CD8-positive, alpha-beta T cell (primary cell): ENCODE measurements at regions of chr21 and their contacts with region 1.

Region 1: GRCh38 chr21:25734904-25735645 is at the starts of genes ATP5PF and GABPA:
- DNase-seq: peak; percentile 95 to 100 (median 98)
- ATAC-seq: peak; percentile 84
- H3K4me3 ChIP-seq: peak within 1 kb of the TSS; percentile 91 to 96
- H3K4me3 Mint-ChIP-seq: peak within 1 kb of the TSS; percentile 100
- H3K27ac ChIP-seq: peak within 1 kb of the TSS; percentile 89 to 99
- H3K27ac Mint-ChIP-seq: peak within 1 kb of the TSS; percentile 100
- H3K4me1 ChIP-seq: peaks cover 21% of the 10 kb centered on the region
- H3K4me1 Mint-ChIP-seq: peaks cover 56% of the 10 kb centered on the region
- H3K27me3 ChIP-seq: no peaks in the 10 kb centered on the region
- H3K27me3 Mint-ChIP-seq: no peaks in the 10 kb centered on the region
- CTCF ChIP-seq: no peak
- total RNA-seq, gene ATP5PF: 26.8 to 28.1 TPM
- total RNA-seq, gene GABPA: 21.3 to 25.1 TPM

Region 2: DNA sequence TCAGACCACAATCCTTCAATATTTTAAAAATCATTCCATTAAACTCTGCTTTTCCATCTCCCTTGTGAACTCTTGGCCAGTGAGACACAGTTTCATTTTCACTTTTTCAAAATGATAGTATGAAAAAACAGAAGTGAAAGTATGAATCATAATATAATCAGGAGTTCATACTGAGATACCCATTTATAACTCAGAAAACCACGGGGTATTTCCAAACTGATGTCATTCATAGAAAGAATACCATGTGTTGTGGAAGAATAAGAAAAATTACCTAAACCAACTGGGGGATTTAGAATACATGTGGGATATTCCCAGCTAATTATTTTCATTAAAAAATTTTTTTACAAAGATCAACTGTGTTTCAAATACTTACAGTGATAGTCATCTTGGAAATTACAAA is 277.7 kb before region 1 on chr21:
- CTCF ChIA-PET with region 1: no interaction called
- POLR2A ChIA-PET with region 1: no interaction called
- intact Hi-C with region 1: loop called (anchors 1 to 5 kb)
- DNase-seq: peak in 2 of 9 experiments; percentile 77 to 87
- ATAC-seq: peak; percentile 90
- H3K4me3 ChIP-seq: peak overlapping the region in 1 of 2 experiments; percentile 30
- H3K4me3 Mint-ChIP-seq: peak overlapping the region; percentile 75
- H3K27ac ChIP-seq: peak overlapping the region in 1 of 2 experiments; percentile 74
- H3K27ac Mint-ChIP-seq: peak overlapping the region; percentile 83
- H3K4me1 ChIP-seq: peaks cover 12% of the 10 kb centered on the region
- H3K4me1 Mint-ChIP-seq: peaks cover 16% of the 10 kb centered on the region
- H3K27me3 ChIP-seq: no peaks in the 10 kb centered on the region
- H3K27me3 Mint-ChIP-seq: no peaks in the 10 kb centered on the region
- CTCF ChIP-seq: no peak

Region 3: DNA sequence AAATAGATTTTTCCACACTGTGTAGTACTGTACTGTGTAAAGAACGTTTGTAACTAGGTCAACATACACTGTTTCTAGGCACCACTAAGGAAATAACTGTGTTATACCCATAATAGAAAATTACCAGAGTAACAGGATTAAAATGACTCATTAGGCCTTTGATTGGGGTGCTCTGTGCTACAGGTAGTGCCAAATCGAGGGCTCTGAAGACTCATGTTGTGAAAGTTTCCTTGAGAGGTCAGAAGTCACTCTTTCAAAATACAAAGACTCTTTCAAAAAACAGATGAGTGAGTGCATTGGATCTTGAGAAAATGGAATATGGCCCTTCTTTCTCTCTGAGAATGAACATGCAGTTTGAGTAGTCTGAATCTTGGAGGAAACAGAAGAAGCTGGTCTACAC is 270.8 kb before region 1 on chr21:
- CTCF ChIA-PET with region 1: no interaction called
- POLR2A ChIA-PET with region 1: no interaction called
- intact Hi-C with region 1: loop called in 1 of 2 experiments (anchors 5 kb)
- DNase-seq: peak in 2 of 9 experiments; percentile 24 to 40
- ATAC-seq: peak; percentile 68
- H3K4me3 ChIP-seq: no peak overlapping the region
- H3K4me3 Mint-ChIP-seq: no peak overlapping the region
- H3K27ac ChIP-seq: no peak overlapping the region
- H3K27ac Mint-ChIP-seq: no peak overlapping the region
- H3K4me1 ChIP-seq: no peaks in the 10 kb centered on the region
- H3K4me1 Mint-ChIP-seq: peaks cover 11% of the 10 kb centered on the region
- H3K27me3 ChIP-seq: no peaks in the 10 kb centered on the region
- H3K27me3 Mint-ChIP-seq: no peaks in the 10 kb centered on the region
- CTCF ChIP-seq: no peak

Region 4: GRCh38 chr21:25561668-25562641 is 173.1 kb before region 1 on chr21:
- CTCF ChIA-PET with region 1: no interaction called
- POLR2A ChIA-PET with region 1: interaction called, 3 read pairs
- intact Hi-C with region 1: loop called in 1 of 2 experiments (anchors 1 kb)
- DNase-seq: peak in 8 of 9 experiments; percentile 45 to 84 (median 66)
- ATAC-seq: peak; percentile 77
- H3K4me3 ChIP-seq: peak overlapping the region; percentile 67 to 80
- H3K4me3 Mint-ChIP-seq: peak overlapping the region; percentile 95
- H3K27ac ChIP-seq: peak overlapping the region; percentile 17 to 69
- H3K27ac Mint-ChIP-seq: peak overlapping the region; percentile 93
- H3K4me1 ChIP-seq: peaks cover 22% of the 10 kb centered on the region
- H3K4me1 Mint-ChIP-seq: peaks cover 52% of the 10 kb centered on the region
- H3K27me3 ChIP-seq: no peaks in the 10 kb centered on the region
- H3K27me3 Mint-ChIP-seq: no peaks in the 10 kb centered on the region
- CTCF ChIP-seq: no peak

Region 5: GRCh38 chr21:25750085-25750484 is 15.0 kb after region 1 on chr21:
- CTCF ChIA-PET with region 1: interaction called, 3 read pairs
- POLR2A ChIA-PET with region 1: interaction called, 9 read pairs
- intact Hi-C with region 1: loop called in 1 of 2 experiments (anchors 2 kb)
- DNase-seq: peak in 1 of 9 experiments; percentile 26
- ATAC-seq: peak; percentile 44
- H3K4me3 ChIP-seq: no peak overlapping the region
- H3K4me3 Mint-ChIP-seq: no peak overlapping the region
- H3K27ac ChIP-seq: peak overlapping the region in 1 of 2 experiments; percentile 44
- H3K27ac Mint-ChIP-seq: peak overlapping the region; percentile 92
- H3K4me1 ChIP-seq: peaks cover 9% of the 10 kb centered on the region
- H3K4me1 Mint-ChIP-seq: peaks cover 13% of the 10 kb centered on the region
- H3K27me3 ChIP-seq: no peaks in the 10 kb centered on the region
- H3K27me3 Mint-ChIP-seq: no peaks in the 10 kb centered on the region
- CTCF ChIP-seq: no peak

Region 6: GRCh38 chr21:25801217-25802014 is 66.3 kb after region 1 on chr21:
- CTCF ChIA-PET with region 1: no interaction called
- POLR2A ChIA-PET with region 1: no interaction called
- intact Hi-C with region 1: loop called (anchors 5 to 10 kb)
- DNase-seq: peak; percentile 63 to 88 (median 82)
- ATAC-seq: peak; percentile 100
- H3K4me3 ChIP-seq: no peak overlapping the region
- H3K4me3 Mint-ChIP-seq: peak overlapping the region; percentile 30
- H3K27ac ChIP-seq: no peak overlapping the region
- H3K27ac Mint-ChIP-seq: no peak overlapping the region
- H3K4me1 ChIP-seq: peaks cover 3% of the 10 kb centered on the region
- H3K4me1 Mint-ChIP-seq: peaks cover 7% of the 10 kb centered on the region
- H3K27me3 ChIP-seq: no peaks in the 10 kb centered on the region
- H3K27me3 Mint-ChIP-seq: peaks cover 10% of the 10 kb centered on the region
- CTCF ChIP-seq: peak; percentile 97

Region 7: DNA sequence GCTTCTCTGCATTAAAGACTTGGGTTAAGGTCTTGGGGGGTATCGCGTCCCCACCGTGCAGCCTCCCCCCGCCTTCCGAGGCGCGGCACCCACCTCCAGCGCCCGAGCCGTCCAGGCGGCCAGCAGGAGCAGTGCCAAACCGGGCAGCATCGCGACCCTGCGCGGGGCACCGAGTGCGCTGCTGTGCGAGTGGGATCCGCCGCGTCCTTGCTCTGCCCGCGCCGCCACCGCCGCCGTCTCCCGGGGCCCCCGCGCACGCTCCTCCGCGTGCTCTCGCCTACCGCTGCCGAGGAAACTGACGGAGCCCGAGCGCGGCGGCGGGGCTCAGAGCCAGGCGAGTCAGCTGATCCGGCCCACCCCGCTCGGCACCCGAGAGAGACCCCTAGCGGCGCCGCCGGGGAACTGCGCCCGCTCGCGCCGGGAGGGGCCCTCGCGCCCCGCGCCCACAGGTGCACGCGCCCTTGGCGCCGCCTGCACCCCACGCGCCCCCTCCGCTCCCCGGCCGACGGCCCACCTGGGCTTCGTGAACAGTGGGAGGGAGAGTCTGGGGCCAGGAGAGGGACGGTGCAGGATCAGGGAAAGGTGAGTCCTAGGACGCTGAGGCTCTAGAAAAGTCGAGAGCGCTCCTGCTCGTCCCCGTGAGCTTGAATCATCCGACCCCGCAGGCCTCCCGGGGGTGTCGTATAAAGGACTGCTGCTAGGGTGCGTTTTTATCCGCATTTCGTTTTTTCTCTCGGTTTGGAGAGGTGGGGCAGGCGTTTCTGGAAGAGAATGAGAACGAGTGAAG is 435.6 kb after region 1 on chr21 and contains the start of gene APP:
- CTCF ChIA-PET with region 1: no interaction called
- POLR2A ChIA-PET with region 1: no interaction called
- intact Hi-C with region 1: loop called (anchors 2 to 5 kb)
- DNase-seq: peak; percentile 75 to 93 (median 84)
- ATAC-seq: peak; percentile 89
- H3K4me3 ChIP-seq: peak within 1 kb of the TSS; percentile 54 to 85
- H3K4me3 Mint-ChIP-seq: peak within 1 kb of the TSS; percentile 96
- H3K27ac ChIP-seq: peak within 1 kb of the TSS in 1 of 2 experiments; percentile 36
- H3K27ac Mint-ChIP-seq: peak within 1 kb of the TSS; percentile 71
- H3K4me1 ChIP-seq: peaks cover 12% of the 10 kb centered on the region
- H3K4me1 Mint-ChIP-seq: peaks cover 14% of the 10 kb centered on the region
- H3K27me3 ChIP-seq: no peaks in the 10 kb centered on the region
- H3K27me3 Mint-ChIP-seq: peaks cover 11% of the 10 kb centered on the region
- CTCF ChIP-seq: peak; percentile 89
- total RNA-seq, gene APP: 14.3 to 18.7 TPM

Region 8: GRCh38 chr21:26766826-26767325 is 1031.8 kb after region 1 on chr21:
- CTCF ChIA-PET with region 1: no interaction called
- POLR2A ChIA-PET with region 1: no interaction called
- intact Hi-C with region 1: no loop called
- DNase-seq: no peak
- ATAC-seq: no peak
- H3K4me3 ChIP-seq: no peak overlapping the region
- H3K4me3 Mint-ChIP-seq: no peak overlapping the region
- H3K27ac ChIP-seq: no peak overlapping the region
- H3K27ac Mint-ChIP-seq: no peak overlapping the region
- H3K4me1 ChIP-seq: no peaks in the 10 kb centered on the region
- H3K4me1 Mint-ChIP-seq: no peaks in the 10 kb centered on the region
- H3K27me3 ChIP-seq: no peaks in the 10 kb centered on the region
- H3K27me3 Mint-ChIP-seq: no peaks in the 10 kb centered on the region
- CTCF ChIP-seq: no peak